Ascending aorta (tissue), 2 donors: ENCODE measurements at regions of chr17 and their contacts with region 1.

Region 1: DNA sequence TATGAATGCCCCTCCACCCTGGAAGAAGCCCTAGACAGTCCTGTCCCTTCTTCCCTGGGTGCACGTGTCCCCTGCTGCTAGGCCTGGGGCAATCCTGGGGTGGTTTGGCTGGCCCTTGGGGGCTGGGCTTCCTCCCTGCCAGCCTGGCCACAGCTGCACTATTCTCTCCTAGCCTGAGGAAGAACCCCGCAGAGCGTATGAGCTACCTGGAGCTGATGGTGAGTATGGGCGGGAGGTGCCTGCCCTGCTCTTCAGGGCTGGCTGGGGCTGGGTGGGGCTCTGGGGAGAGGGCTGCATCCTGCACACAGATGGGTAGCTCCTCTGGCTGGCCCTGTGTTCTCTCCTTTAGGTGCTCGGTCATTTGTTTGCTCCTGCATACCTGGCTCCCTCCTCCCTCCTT is 28.8 kb downstream of the MAP2K3 start:
- DNase-seq: peak in 1 of 2 donors; percentile 54
- H3K4me3 ChIP-seq: no peak overlapping the region
- H3K27ac ChIP-seq: no peak overlapping the region
- H3K4me1 ChIP-seq: peaks cover 9 to 18% of the 10 kb centered on the region in 2 donors
- H3K27me3 ChIP-seq: no peaks in the 10 kb centered on the region
- CTCF ChIP-seq: no peak

Region 2: DNA sequence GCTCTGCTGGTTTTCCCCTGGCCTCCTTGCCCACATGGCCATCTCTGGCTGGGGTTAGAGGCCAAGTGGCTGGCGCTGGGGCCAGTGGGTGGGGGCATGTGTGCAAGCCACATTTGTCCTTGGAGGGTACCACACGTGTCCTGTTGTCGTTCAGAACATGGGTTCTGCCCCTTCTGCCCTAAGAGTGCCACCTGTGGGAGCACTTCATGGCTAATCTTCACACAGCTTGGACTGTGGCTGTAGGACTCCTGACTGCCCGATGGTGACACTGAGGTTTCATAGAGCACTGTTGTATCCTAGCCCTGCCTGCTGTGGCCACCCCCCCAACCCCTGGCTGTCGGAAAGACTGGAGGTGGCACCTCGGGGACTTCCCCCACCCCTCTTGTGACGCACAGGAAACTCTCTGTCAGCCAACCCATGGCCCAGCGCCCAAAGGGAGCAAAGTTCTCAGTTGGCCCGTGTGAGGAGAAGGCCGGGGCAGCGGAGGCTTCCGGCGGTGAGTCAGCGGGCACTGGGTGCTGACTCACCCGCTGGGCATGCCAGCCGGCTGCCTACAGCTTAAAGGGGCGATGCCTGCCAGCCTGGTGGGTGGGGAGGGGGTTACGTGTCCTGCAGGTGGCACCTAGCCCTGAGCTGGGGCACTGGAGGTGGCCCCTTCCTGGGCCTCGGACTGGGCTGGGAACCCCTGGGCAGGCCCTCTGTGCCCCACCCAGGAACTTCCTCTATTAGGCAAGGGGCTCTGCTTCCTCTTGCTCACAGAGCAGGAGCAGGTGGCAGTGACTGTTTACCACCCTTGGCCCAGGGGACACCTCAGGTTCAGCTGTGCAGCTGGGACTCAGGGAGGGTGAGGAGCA is 25.5 kb before region 1 on chr17:
- intact Hi-C with region 1: loop called (anchors 2 kb)
- DNase-seq: peak; percentile 96 to 100
- H3K4me3 ChIP-seq: peak overlapping the region; percentile 91 to 94
- H3K27ac ChIP-seq: peak overlapping the region; percentile 95 to 97
- H3K4me1 ChIP-seq: peaks cover 29 to 47% of the 10 kb centered on the region in 2 donors
- H3K27me3 ChIP-seq: no peaks in the 10 kb centered on the region
- CTCF ChIP-seq: peak in 1 of 3 experiments; percentile 7

Region 3: GRCh38 chr17:21511363-21512198 is 198.3 kb after region 1 on chr17:
- intact Hi-C with region 1: loop called (anchors 5 kb)
- DNase-seq: peak; percentile 21 to 91
- H3K4me3 ChIP-seq: peak overlapping the region; percentile 70 to 74
- H3K27ac ChIP-seq: peak overlapping the region; percentile 45 to 49
- H3K4me1 ChIP-seq: peaks cover 0 to 7% of the 10 kb centered on the region in 2 donors
- H3K27me3 ChIP-seq: no peaks in the 10 kb centered on the region
- CTCF ChIP-seq: peak; percentile 35 to 81 (median 80)